MCF 10A (cell line): ENCODE measurements at regions of chr21 and their contacts with region 1.

Region 1: GRCh38 chr21:36113647-36114428 is 21.0 kb upstream of the CBR3 start:
- DNase-seq: no peak
- H3K4me3 Mint-ChIP-seq: no peak overlapping the region
- H3K27ac Mint-ChIP-seq: no peak overlapping the region
- H3K4me1 Mint-ChIP-seq: peaks cover 13% of the 10 kb centered on the region
- H3K27me3 Mint-ChIP-seq: no peaks in the 10 kb centered on the region
- CTCF ChIP-seq: no peak

Region 2: GRCh38 chr21:35239811-35240219 is 874.0 kb before region 1 on chr21:
- CTCF ChIA-PET with region 1: no interaction called
- POLR2A ChIA-PET with region 1: no interaction called
- intact Hi-C with region 1: no loop called
- DNase-seq: no peak
- H3K4me3 Mint-ChIP-seq: no peak overlapping the region
- H3K27ac Mint-ChIP-seq: no peak overlapping the region
- H3K4me1 Mint-ChIP-seq: peaks cover 5% of the 10 kb centered on the region
- H3K27me3 Mint-ChIP-seq: no peaks in the 10 kb centered on the region
- CTCF ChIP-seq: no peak

Region 3: GRCh38 chr21:36028127-36029069 is 85.4 kb before region 1 on chr21:
- CTCF ChIA-PET with region 1: interaction called, 14 read pairs
- POLR2A ChIA-PET with region 1: no interaction called
- intact Hi-C with region 1: loop called (anchors 1 kb)
- DNase-seq: peak; percentile 70
- H3K4me3 Mint-ChIP-seq: no peak overlapping the region
- H3K27ac Mint-ChIP-seq: no peak overlapping the region
- H3K4me1 Mint-ChIP-seq: peaks cover 7% of the 10 kb centered on the region
- H3K27me3 Mint-ChIP-seq: no peaks in the 10 kb centered on the region
- CTCF ChIP-seq: peak; percentile 93

Region 4: DNA sequence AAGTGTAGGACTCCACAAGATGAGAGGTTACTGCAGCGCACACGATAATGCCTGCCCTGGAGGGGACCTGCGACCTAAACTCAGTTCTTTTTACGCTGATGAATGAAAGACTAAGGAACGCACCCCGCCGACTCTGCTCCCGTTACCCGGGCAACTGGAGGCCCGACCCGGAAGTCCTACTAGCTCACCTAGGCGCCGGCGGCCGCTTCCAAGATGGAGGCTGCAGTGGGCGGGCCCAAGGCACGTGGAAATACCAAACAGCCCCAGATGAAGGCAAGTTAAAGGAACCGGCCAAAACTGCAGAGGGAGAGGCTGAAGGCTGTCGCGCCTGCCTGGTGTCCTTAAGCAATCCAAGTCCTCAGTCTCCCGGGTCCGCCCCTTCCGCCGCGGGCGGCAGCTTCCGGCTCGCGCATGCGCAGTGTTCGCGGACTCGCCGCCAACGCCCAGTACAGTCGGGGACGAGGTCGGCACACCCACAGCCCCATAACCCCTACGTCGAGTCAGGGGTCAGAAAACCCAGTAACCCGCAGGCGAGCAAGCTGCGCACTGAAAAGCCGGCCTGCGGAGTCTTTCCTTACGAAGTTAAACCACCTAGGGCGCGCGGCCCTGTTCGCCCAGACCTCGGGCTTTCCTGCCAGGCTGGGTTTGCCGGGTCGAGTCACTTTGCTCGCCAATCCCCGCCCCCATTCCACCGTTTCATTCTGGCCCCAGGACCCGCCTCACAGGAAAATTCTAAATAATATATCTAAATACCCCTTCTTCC is 53.5 kb before region 1 on chr21 and contains the start of gene SETD4:
- CTCF ChIA-PET with region 1: interaction called, 9 read pairs
- POLR2A ChIA-PET with region 1: interaction called, 16 read pairs
- intact Hi-C with region 1: loop called (anchors 2 kb)
- DNase-seq: peak; percentile 93
- H3K4me3 Mint-ChIP-seq: peak within 1 kb of the TSS; percentile 90
- H3K27ac Mint-ChIP-seq: peak within 1 kb of the TSS; percentile 90
- H3K4me1 Mint-ChIP-seq: peaks cover 6% of the 10 kb centered on the region
- H3K27me3 Mint-ChIP-seq: no peaks in the 10 kb centered on the region
- CTCF ChIP-seq: no peak
- total RNA-seq, gene SETD4: 22.6 and 23.3 TPM in 2 replicates

Region 5: DNA sequence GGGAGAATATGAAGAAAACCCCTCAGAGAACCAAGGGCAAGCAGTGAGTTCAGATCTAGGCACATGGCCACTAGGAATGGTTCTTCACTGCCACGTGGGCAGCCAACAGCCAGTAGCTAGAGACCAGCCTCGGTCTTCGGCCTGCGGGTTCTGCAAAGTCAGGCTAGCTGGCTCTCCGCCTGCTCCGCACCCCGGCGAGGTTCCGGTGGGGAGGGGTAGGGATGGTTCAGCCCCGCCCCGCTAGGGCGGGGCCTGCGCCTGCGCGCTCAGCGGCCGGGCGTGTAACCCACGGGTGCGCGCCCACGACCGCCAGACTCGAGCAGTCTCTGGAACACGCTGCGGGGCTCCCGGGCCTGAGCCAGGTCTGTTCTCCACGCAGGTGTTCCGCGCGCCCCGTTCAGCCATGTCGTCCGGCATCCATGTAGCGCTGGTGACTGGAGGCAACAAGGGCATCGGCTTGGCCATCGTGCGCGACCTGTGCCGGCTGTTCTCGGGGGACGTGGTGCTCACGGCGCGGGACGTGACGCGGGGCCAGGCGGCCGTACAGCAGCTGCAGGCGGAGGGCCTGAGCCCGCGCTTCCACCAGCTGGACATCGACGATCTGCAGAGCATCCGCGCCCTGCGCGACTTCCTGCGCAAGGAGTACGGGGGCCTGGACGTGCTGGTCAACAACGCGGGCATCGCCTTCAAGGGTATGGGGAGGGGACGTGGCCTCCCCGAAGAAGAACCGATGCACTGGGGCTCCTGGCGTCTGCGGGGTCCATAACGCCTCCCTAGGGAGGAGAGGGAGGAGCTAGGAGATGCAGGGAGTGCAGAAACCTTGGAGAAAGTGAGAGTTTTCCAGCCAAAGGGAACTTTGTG is 43.9 kb before region 1 on chr21 and contains the start of gene CBR1:
- CTCF ChIA-PET with region 1: interaction called, 13 read pairs
- POLR2A ChIA-PET with region 1: interaction called, 18 read pairs
- intact Hi-C with region 1: no loop called
- DNase-seq: peak; percentile 90
- H3K4me3 Mint-ChIP-seq: peak within 1 kb of the TSS; percentile 88
- H3K27ac Mint-ChIP-seq: peak within 1 kb of the TSS; percentile 92
- H3K4me1 Mint-ChIP-seq: peaks cover 20% of the 10 kb centered on the region
- H3K27me3 Mint-ChIP-seq: no peaks in the 10 kb centered on the region
- CTCF ChIP-seq: no peak
- total RNA-seq, gene CBR1: 35.8 and 38.6 TPM in 2 replicates

Region 6: DNA sequence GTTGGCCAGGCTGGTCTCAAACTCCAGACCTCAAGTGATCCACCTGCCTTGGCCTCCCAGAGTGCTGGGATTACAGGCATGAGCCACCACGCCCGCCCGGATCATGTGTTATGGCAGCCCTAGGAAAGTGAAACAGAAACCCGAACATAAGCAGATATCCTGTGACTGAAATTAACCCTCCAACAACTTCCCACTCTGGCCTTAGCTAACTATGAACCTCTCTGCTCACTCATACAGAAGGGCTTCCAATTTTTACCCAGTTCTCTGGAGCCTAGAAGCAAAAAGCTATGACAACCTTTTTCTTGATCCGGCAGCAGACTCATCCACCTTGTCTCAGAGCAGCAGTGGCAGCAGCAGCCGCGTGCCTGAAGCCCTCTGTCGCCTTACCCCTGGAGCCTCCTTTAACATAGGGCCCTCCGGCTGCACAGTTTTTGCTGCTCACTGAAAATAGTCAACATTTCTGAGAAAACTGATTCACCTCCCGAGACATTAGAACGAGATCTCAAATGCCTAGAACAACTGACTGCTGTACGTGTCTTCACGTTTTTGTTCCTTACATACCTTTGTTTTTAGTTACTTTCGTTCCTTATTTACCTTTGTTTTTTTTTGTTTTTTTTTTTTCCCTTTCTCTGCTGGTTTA is 34.7 kb before region 1 on chr21:
- CTCF ChIA-PET with region 1: interaction called, 15 read pairs
- POLR2A ChIA-PET with region 1: interaction called, 4 read pairs
- intact Hi-C with region 1: no loop called
- DNase-seq: no peak
- H3K4me3 Mint-ChIP-seq: no peak overlapping the region
- H3K27ac Mint-ChIP-seq: no peak overlapping the region
- H3K4me1 Mint-ChIP-seq: peaks cover 6% of the 10 kb centered on the region
- H3K27me3 Mint-ChIP-seq: no peaks in the 10 kb centered on the region
- CTCF ChIP-seq: no peak

Region 7: GRCh38 chr21:36125512-36126222 is 11.8 kb after region 1 on chr21:
- CTCF ChIA-PET with region 1: interaction called, 10 read pairs
- POLR2A ChIA-PET with region 1: no interaction called
- intact Hi-C with region 1: no loop called
- DNase-seq: peak; percentile 54
- H3K4me3 Mint-ChIP-seq: no peak overlapping the region
- H3K27ac Mint-ChIP-seq: no peak overlapping the region
- H3K4me1 Mint-ChIP-seq: peaks cover 14% of the 10 kb centered on the region
- H3K27me3 Mint-ChIP-seq: no peaks in the 10 kb centered on the region
- CTCF ChIP-seq: peak; percentile 79

Region 8: GRCh38 chr21:36306872-36307534 is 193.2 kb after region 1 on chr21:
- CTCF ChIA-PET with region 1: no interaction called
- POLR2A ChIA-PET with region 1: no interaction called
- intact Hi-C with region 1: no loop called
- DNase-seq: no peak
- H3K4me3 Mint-ChIP-seq: no peak overlapping the region
- H3K27ac Mint-ChIP-seq: no peak overlapping the region
- H3K4me1 Mint-ChIP-seq: peaks cover 4% of the 10 kb centered on the region
- H3K27me3 Mint-ChIP-seq: no peaks in the 10 kb centered on the region
- CTCF ChIP-seq: no peak